Astrocyte of the cerebellum (primary cell): ENCODE measurements at regions of chr20 and their contacts with region 1.

Region 1: DNA sequence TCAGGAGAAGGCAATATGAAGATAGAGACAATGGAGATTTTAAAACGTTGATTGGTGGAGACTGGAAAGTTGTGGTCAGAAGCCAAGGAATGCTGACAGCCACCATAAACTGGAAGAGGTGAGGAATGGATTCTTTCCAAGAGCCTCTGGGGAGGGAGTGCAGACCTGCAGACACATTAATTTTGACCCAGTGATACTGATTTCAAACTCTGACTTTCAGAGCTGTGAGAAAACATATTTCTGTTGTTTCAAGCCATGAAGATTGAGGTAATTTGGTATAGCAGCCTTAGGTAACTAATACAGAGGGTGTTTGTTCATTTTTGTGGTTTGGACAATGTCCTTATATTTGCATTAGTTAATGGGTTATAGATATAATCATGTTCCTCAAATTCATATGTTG is 85.3 kb upstream of the GTSF1L start:
- DNase-seq: no peak
- H3K4me3 ChIP-seq: no peak overlapping the region
- CTCF ChIP-seq: no peak

Region 2: DNA sequence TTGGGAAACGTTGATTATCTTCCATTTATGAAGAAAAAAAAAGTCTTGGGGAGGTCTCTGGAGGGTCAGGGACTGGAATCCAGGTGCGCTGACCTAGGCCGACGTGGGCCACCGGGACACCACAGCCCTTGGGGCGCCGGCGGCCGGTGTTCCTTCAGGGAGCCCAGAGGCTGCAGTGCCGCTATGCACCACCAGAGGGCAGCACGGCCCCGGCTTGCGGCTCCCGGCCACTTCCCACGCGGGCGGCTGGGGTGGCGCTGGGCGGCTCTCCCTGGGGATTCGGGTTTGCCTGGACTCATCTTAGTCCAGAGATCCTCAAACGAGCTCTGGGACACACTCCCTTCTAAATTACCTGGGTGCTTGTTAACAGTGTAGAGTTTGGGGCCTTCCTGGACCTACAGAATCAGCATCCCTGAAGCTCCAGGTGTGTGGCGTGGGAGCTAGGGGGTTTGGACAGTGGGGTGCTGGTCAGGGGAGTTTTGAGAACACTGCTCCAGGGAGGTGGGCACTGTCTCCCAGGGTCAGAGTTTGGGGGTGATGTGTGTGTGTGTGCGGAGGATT is 62.3 kb before region 1 on chr20:
- in situ Hi-C with region 1: no loop called
- DNase-seq: no peak
- H3K4me3 ChIP-seq: no peak overlapping the region
- CTCF ChIP-seq: peak; percentile 99

Region 3: GRCh38 chr20:43767686-43768474 is 44.3 kb before region 1 on chr20:
- in situ Hi-C with region 1: loop called (anchors 5 kb)
- DNase-seq: no peak
- H3K4me3 ChIP-seq: no peak overlapping the region
- CTCF ChIP-seq: no peak

Region 4: GRCh38 chr20:43844778-43845614 is 32.8 kb after region 1 on chr20:
- in situ Hi-C with region 1: loop called (anchors 5 kb)
- DNase-seq: peak; percentile 94
- H3K4me3 ChIP-seq: no peak overlapping the region
- CTCF ChIP-seq: peak; percentile 56